Tibial artery (tissue), 4 donors: ENCODE measurements at regions of chr11 and their contacts with region 1.

Region 1: GRCh38 chr11:63369165-63369970 is at the start of gene SLC22A9:
- DNase-seq: no peak
- H3K4me3 ChIP-seq: no peak within 1 kb of the TSS
- H3K27ac ChIP-seq: no peak within 1 kb of the TSS
- H3K4me1 ChIP-seq: no peaks in the 10 kb centered on the region
- H3K27me3 ChIP-seq: no peaks in the 10 kb centered on the region
- CTCF ChIP-seq: no peak

Region 2: DNA sequence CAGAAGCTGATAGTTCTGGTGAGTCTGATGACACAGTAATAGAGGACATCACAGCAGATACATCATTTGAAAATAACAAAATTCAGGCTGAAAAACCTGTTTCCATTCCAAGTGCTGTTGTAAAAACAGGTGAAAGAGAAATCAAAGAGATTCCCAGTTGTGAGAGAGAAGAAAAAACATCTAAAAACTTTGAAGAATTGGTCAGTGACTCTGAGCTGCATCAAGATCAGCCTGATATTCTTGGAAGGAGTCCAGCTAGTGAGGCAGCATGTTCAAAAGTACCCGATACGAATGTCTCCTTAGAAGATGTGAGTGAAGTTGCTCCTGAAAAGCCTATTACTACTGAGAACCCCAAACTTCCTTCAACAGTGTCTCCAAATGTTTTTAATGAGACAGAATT is 350.6 kb after region 1 on chr11:
- intact Hi-C with region 1: loop called (anchors 10 kb)
- DNase-seq: no peak
- H3K4me3 ChIP-seq: no peak overlapping the region
- H3K27ac ChIP-seq: no peak overlapping the region
- H3K4me1 ChIP-seq: no peaks in the 10 kb centered on the region
- H3K27me3 ChIP-seq: no peaks in the 10 kb centered on the region
- CTCF ChIP-seq: no peak